AG04449 (cell line): ENCODE measurements at regions of chr3 and their contacts with region 1.

Region 1: DNA sequence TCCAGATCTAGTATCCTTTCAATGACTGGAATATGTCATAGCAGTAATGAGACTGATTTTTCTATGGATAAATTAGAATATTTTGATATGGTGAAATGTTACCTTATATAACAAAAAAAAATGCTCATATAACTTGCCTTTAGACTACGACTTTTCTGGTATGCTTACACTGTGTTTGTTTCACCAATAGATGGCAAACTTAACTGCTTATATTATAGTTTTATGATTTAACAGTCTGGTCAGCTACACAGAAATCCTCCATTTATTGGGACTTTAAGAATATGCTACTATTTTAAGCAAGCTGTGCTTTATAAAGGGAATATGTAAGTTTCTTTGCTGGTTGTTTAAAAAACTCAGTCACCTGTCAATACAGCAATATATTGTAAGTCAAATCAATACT is 205.6 kb downstream of the VGLL3 start:
- DNase-seq: no peak
- H3K4me3 ChIP-seq: no peak overlapping the region
- CTCF ChIP-seq: peak; percentile 44

Region 2: DNA sequence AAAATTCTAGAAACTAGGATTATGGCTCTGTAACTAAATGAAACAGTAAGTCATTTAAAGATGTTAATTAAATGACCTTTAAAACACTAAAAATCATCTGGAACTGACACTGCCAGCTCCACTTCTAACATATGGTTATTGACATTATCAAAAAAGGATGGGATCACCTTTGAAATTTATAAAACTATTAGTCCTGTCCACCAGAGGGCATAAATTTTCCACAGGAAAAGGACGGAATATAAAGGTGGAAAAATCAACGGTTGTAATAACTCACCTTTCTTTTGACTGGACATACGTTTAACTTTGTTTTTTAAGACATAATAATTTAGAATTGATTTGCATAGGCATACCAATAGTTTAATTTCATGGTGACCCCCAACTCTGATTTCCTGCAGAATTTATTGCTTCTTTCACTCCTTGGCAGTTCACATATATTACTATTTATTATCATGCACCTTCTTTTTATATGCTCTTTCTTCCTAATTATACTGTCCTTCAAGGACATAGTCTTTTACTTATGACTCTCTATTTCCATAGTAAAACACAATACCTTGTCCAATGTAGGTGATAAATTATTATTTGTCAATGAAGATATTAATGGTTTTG is 1480.9 kb before region 1 on chr3:
- CTCF ChIA-PET with region 1: no interaction called
- POLR2A ChIA-PET with region 1: no interaction called
- DNase-seq: no peak
- H3K4me3 ChIP-seq: no peak overlapping the region
- CTCF ChIP-seq: no peak

Region 3: DNA sequence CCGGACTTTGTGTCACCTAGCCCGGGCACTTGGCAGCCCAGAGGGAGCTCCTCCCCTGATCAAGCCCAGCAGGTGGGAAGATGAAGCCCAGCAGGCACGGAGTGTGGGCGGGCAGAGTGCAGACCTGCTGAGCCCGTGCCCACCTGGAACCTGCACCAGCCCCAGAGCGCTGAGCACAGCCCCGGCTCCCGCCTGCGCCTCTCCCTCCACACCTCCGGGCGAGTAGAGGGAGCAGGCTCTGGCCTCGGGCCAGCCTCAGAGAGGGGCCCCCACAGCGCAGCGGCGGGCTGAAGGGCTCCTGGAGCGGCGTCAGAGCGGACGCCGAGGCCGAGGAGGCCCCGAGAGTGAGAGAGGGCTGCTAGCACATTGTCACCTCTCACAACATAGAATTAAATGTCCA is 52.1 kb before region 1 on chr3:
- CTCF ChIA-PET with region 1: no interaction called
- POLR2A ChIA-PET with region 1: no interaction called
- DNase-seq: no peak
- H3K4me3 ChIP-seq: no peak overlapping the region
- CTCF ChIP-seq: no peak

Region 4: GRCh38 chr3:86849991-86850390 is 64.6 kb after region 1 on chr3:
- CTCF ChIA-PET with region 1: no interaction called
- POLR2A ChIA-PET with region 1: no interaction called
- DNase-seq: no peak
- H3K4me3 ChIP-seq: no peak overlapping the region
- CTCF ChIP-seq: no peak

Region 5: GRCh38 chr3:86937305-86937791 is 152.0 kb after region 1 on chr3:
- CTCF ChIA-PET with region 1: interaction called, 10 read pairs
- POLR2A ChIA-PET with region 1: interaction called, 3 read pairs
- DNase-seq: peak; percentile 97
- H3K4me3 ChIP-seq: no peak overlapping the region
- CTCF ChIP-seq: no peak

Region 6: GRCh38 chr3:86969500-86970189 is 184.3 kb after region 1 on chr3:
- CTCF ChIA-PET with region 1: interaction called, 26 read pairs
- POLR2A ChIA-PET with region 1: no interaction called
- DNase-seq: no peak
- H3K4me3 ChIP-seq: no peak overlapping the region
- CTCF ChIP-seq: peak; percentile 58

Region 7: DNA sequence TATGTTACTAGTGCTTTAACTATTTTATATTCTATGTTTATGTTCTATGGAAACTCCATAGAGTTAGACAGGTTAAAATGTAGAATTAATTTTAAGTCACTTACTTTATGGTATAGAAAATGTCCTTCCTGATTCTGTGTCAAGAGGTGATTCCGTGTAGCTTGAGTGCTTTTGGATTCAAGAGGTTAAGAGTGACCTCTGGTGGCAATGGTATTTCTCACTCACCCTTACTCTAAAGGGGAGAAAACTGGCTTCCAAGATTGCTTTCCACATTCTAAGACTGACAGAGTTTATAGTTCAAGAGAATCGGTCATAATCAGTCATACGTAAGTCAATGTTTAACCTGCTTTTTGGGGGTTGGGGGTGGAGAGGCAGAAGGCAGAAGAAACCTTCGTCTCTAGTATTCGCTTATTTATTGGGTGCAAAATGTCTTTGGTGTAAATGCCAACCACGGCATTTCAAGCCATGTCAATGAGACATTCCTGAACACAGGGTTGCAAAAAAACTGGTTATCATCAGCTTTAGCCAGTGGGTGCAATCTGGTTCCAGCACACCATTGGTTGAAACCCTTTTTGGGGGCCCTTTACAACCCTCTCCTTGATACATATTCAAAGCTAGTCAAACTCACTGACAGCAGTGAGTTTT is 297.5 kb after region 1 on chr3:
- CTCF ChIA-PET with region 1: interaction called, 165 read pairs
- POLR2A ChIA-PET with region 1: no interaction called
- DNase-seq: no peak
- H3K4me3 ChIP-seq: no peak overlapping the region
- CTCF ChIP-seq: peak; percentile 61